Sciatic nerve (tissue), 2 donors: ENCODE measurements at regions of chr2 and their contacts with region 1.

Region 1: DNA sequence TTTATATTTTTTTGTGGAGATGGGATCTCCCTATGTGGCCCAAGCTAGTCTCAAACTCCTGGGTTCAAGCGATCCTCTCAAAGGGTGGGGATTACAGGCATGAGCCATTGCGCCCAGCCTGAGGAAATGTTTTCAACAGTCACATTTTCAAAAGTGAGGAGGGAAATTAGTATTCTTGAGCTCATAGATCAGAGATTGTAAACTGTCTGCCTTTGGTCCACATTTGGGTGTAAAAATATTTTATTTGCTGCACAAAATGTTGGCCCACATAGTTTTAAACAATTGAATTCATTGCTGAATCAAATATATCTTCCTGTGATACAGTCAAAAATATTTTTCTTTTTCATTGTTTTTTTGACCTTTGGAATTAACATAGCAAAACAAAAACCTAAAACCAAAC is 48.6 kb downstream of the NOP58 start:
- DNase-seq: no peak
- ATAC-seq: no peak

Region 2: DNA sequence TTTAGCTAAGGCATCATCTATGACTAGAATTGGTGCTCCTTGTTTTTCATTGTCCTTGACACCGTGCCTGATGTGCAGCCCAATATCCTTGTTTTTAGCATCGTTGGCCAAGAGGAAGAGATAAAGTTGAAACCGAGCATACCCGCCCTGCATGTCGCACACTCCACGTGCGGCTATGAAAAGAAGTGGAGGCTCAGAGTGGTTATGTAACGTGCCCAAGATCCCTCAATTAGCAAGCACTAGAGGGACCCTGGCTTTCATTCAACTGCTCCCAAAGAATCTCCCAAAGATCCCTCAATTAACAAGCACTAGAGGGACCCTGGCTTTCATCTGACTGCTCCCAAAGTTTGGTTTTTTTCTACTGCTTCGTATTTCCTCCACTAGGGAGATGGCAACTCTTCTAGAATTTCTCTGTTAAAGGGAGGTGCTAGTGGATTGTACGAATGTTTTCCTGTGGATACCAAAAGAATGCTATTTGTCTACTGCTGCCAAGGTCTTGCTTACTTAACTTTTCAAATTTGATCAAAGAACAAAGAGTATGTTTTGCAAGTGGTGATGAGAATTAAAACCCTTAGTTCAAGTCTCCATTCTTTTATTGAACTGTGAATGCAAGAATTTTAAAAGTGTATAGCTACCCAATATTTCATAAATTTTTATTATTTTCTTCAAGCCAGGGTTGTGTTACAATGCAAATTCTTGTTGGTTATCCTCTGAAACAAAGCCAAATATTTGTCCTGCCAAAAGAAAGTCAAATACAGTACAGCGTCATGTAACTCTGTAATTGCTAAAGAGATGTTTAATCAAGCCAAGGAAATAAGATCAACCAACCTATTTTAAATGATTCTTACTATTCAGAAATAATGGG is 1636.2 kb before region 1 on chr2:
- intact Hi-C with region 1: no loop called
- DNase-seq: no peak
- ATAC-seq: peak; percentile 85

Region 3: GRCh38 chr2:202238234-202239197 is 75.6 kb before region 1 on chr2 and contains the start of gene SUMO1:
- intact Hi-C with region 1: no loop called
- DNase-seq: peak; percentile 93
- ATAC-seq: peak; percentile 98
- total RNA-seq, gene SUMO1: 68.9 TPM

Region 4: GRCh38 chr2:202361108-202361507 is 47.0 kb after region 1 on chr2:
- intact Hi-C with region 1: loop called (anchors 2 kb)
- DNase-seq: no peak
- ATAC-seq: no peak